ENCODE measurements at regions of chr20 and their contacts with region 1.

Region 1: DNA sequence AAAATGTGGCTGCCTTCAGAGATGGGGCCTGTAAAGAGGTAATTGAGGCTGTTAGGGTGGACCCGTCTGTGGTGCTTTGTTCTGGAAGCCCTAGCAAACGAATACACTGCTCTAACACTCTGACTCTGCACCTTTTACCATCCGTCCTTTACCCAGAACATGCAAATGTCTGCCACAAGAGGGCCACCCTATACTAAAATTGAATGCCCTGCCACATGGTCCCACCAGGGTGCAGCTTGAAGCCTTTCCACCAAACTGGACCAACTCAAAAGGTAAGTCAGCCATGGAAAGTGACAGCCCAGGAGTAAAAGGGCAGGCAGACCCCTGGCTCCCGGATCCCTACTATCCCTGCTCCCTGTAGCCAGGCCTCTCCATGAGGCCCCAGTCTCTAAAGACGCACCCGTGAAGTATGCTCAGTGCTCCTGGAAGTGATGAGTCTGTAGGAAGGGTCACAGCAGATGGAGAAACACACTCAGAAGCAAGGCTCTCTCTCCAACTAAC is 5.8 kb upstream of the BFSP1 start:
- DNase-seq: peak; percentile 66
- H3K4me3 ChIP-seq: no peak overlapping the region
- H3K27ac ChIP-seq: no peak overlapping the region
- H3K4me1 ChIP-seq: peaks cover 8% of the 10 kb centered on the region
- H3K27me3 ChIP-seq: no peaks in the 10 kb centered on the region
- CTCF ChIP-seq: peak; percentile 88 to 96

Region 2: DNA sequence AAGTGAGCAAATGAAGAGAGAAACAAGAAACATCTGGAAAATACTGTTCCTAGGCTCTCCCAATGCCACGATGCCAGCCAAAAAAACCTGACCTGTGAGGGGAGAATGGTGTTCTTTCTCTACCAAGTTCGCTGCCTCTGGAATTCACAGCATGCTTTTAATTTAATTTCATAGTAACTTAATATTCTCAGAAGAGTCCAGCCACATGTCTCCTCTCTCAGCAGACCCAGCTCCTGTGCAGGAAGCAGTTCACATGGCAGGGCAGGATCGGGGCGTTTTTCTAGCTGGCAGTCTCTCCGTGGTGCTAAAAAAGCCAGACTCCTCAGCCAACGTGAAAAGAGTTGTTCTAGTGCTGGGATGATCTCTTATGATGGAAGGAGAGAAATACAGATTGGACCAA is 63.3 kb before region 1 on chr20:
- CTCF ChIA-PET with region 1: no interaction called
- dilution Hi-C with region 1: no loop called
- in situ Hi-C with region 1: no loop called
- intact Hi-C with region 1: no loop called
- DNase-seq: no peak
- H3K4me3 ChIP-seq: no peak overlapping the region
- H3K27ac ChIP-seq: no peak overlapping the region
- H3K4me1 ChIP-seq: no peaks in the 10 kb centered on the region
- H3K27me3 ChIP-seq: no peaks in the 10 kb centered on the region
- CTCF ChIP-seq: no peak

Region 3: GRCh38 chr20:17569616-17570346 is 32.8 kb after region 1 on chr20 and contains the start of gene DSTN:
- CTCF ChIA-PET with region 1: interaction called, 3 read pairs
- dilution Hi-C with region 1: no loop called
- in situ Hi-C with region 1: no loop called
- intact Hi-C with region 1: loop called (anchors 1 kb)
- DNase-seq: peak; percentile 95
- H3K4me3 ChIP-seq: peak within 1 kb of the TSS; percentile 95 to 99 (median 95)
- H3K27ac ChIP-seq: peak within 1 kb of the TSS; percentile 97
- H3K4me1 ChIP-seq: peaks cover 38% of the 10 kb centered on the region
- H3K27me3 ChIP-seq: no peaks in the 10 kb centered on the region
- CTCF ChIP-seq: no peak
- total RNA-seq, gene DSTN: 398 to 428 TPM

Region 4: DNA sequence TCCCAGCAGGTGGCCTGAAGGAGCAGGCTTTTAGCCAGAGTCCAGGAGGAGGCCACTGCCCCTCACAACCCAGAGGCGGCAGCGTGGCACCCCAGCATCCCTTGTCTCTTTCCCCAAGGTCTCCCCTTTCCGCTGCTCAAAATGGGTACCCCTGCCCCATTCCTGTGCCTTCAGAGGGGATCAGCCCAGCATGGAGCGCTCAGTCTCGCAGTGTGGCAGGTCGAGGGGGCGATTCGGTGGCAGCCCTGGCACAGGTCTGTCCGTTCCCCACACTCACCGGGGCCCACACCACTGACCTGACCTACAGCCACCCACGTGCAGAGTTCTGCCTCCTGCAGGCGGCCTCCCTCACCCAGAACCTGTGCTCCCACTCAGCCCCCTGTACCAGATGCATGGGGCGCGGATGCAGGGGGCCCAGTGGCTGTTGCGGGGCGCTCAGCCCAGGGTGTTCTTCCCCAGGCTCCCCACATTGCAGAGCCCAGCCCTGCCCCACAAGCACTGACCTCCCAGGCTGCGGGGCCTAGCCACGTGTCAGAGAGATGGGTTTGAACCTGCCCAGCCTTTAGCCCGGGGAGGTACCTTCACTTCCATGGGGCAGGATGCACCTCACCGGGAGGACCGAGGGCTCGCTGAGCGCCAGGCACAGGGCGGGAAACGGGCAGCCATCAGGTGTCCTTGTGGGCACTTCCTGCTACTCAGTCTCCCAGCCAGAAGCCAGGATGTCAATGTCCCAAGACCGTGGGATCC is 74.7 kb after region 1 on chr20:
- CTCF ChIA-PET with region 1: no interaction called
- dilution Hi-C with region 1: no loop called
- in situ Hi-C with region 1: loop called in 1 of 2 experiments (anchors 10 kb)
- intact Hi-C with region 1: loop called (anchors 1 kb)
- DNase-seq: peak; percentile 70
- H3K4me3 ChIP-seq: no peak overlapping the region
- H3K27ac ChIP-seq: no peak overlapping the region
- H3K4me1 ChIP-seq: peaks cover 29% of the 10 kb centered on the region
- H3K27me3 ChIP-seq: no peaks in the 10 kb centered on the region
- CTCF ChIP-seq: peak in 1 of 2 donors; percentile 75

Region 5: DNA sequence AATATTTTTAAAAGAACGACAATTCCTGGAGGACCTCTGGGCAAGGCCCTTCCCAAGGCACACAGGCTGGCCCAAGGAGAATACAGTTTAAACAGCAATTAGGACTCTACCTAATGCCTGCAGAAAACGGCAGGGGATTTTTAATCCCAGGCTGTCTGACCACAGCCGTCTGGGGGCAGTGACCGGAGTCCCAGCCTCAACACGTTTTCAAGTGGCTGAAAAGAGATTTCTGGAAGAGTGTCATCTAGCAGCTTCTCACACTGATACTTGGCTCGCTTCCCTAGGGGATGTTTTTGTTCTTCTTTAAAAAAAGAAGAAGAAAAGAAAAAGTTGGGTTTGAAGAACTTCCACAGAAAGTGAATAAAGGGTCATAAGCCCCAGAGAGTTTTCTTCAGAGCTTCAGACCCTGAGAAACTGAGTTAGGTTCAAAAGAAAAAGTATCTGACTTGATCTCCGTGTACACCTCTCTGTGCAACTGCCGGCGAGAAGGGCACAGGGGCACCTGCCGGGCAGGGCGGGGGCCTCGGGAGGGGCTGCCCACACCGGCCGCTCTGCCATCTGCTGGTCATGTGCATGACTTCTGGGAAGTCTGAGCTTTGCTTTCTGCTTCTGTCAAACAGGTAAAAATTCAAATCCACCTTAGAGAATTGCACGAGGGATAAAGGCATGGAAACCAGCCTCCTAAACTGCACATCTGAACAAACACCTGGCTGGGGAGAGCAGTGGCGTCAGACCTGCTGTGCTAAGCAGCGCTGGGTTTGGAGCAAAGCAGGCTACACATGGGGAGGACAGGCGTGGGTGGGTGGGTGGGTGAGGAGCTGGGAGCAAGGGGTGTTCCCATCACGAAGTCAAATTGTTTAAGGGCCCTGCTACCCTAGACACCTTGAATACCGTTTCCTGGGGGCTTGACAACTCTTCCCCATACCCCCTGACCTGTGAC is 112.1 kb after region 1 on chr20:
- CTCF ChIA-PET with region 1: interaction called, 4 read pairs
- dilution Hi-C with region 1: no loop called
- in situ Hi-C with region 1: no loop called
- intact Hi-C with region 1: loop called (anchors 1 kb)
- DNase-seq: no peak
- H3K4me3 ChIP-seq: no peak overlapping the region
- H3K27ac ChIP-seq: no peak overlapping the region
- H3K4me1 ChIP-seq: peaks cover 2% of the 10 kb centered on the region
- H3K27me3 ChIP-seq: no peaks in the 10 kb centered on the region
- CTCF ChIP-seq: peak; percentile 24 to 56

Region 6: DNA sequence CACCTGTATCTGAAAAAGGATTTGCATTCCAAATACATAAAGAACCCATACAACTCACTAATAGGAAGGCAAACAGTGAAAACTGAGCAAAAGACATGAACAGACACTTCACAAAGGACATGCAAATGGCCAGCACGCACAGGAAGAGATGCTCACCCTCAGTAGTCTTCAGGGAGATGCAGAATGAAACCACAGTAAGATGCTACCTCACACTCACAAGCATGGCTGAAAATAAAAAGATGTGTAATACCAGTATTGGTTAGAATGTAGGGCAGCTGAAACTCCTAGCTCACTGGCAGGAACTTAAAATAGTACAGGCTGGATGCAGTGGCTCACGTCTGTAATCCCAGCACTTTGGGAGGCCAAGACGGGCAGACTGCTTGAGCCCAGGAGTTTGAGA is 367.0 kb after region 1 on chr20:
- CTCF ChIA-PET with region 1: no interaction called
- dilution Hi-C with region 1: no loop called
- in situ Hi-C with region 1: no loop called
- intact Hi-C with region 1: no loop called
- DNase-seq: no peak
- H3K4me3 ChIP-seq: no peak overlapping the region
- H3K27ac ChIP-seq: no peak overlapping the region
- H3K4me1 ChIP-seq: no peaks in the 10 kb centered on the region
- H3K27me3 ChIP-seq: no peaks in the 10 kb centered on the region
- CTCF ChIP-seq: no peak

Region 7: GRCh38 chr20:17938871-17939619 is 402.1 kb after region 1 on chr20:
- CTCF ChIA-PET with region 1: no interaction called
- dilution Hi-C with region 1: no loop called
- in situ Hi-C with region 1: no loop called
- intact Hi-C with region 1: loop called (anchors 10 kb)
- DNase-seq: peak; percentile 29
- H3K4me3 ChIP-seq: no peak overlapping the region
- H3K27ac ChIP-seq: no peak overlapping the region
- H3K4me1 ChIP-seq: no peaks in the 10 kb centered on the region
- H3K27me3 ChIP-seq: no peaks in the 10 kb centered on the region
- CTCF ChIP-seq: peak; percentile 82 to 83

Measured in mammary epithelial cell (primary cell).